Natural killer cell (primary cell): ENCODE measurements at regions of chr7 and their contacts with region 1.

Region 1: GRCh38 chr7:604001-604883 is 84.6 kb upstream of the PDGFA start:
- DNase-seq: peak; percentile 93 to 96
- ATAC-seq: peak; percentile 61 to 89 (median 78)
- H3K4me3 ChIP-seq: peak overlapping the region; percentile 41
- H3K4me3 Mint-ChIP-seq: peak overlapping the region; percentile 98
- H3K27ac ChIP-seq: peak overlapping the region; percentile 98
- H3K27ac Mint-ChIP-seq: peak overlapping the region; percentile 100
- H3K4me1 ChIP-seq: peaks cover 78% of the 10 kb centered on the region
- H3K4me1 Mint-ChIP-seq: peaks cover 25 to 43% of the 10 kb centered on the region in 2 donors
- H3K27me3 ChIP-seq: no peaks in the 10 kb centered on the region
- H3K27me3 Mint-ChIP-seq: no peaks in the 10 kb centered on the region
- CTCF ChIP-seq: no peak

Region 2: DNA sequence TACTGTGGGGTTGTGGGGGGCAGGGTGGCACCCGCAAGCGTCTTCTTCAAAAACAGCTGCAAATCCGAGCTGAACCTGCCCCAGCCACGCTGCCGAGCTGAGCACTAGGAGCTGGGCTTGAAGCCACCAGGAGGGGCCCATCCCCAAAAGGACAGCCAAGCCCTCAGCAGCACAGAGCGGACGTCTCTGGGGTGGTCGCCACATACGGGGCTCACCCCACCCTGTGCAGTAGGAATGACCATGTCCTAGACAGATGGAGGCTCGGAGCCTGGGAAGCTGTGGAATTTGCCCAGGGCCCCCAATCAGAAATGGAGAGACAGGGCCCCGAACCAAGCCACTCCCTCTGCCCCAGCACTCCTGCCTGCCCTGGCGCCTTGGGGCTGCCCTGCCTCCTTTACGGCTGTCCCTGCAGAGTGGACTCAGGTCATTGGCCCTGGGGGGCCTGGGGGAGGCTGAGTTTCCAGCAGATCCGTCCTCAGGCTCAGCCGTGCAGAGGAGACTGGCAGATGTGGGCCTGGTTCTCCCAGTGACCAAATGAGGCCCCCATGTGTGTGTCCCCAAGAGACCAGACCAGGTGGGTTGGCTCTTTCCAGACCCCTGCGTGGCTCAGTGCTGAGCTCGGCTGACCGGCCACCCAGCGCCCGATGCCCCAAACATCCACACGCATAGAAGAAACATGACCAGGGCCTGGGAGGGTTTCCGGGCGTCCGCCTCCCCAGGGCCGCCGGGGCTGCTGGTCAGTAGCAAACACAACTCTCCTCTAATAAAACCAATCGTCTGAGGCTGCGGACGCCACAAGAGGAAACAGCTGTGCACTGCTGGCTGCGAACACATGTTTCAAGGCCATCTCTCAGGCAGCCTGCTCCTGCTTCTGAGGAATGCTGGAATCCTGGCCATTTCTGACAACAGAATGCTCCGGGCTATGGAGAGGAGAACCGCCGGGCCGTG is 139.5 kb before region 1 on chr7:
- intact Hi-C with region 1: loop called (anchors 5 kb)
- DNase-seq: no peak
- ATAC-seq: no peak
- H3K4me3 ChIP-seq: no peak overlapping the region
- H3K4me3 Mint-ChIP-seq: no peak overlapping the region
- H3K27ac ChIP-seq: no peak overlapping the region
- H3K27ac Mint-ChIP-seq: no peak overlapping the region
- H3K4me1 ChIP-seq: peaks cover 15% of the 10 kb centered on the region
- H3K4me1 Mint-ChIP-seq: peaks cover 18 to 27% of the 10 kb centered on the region in 2 donors
- H3K27me3 ChIP-seq: no peaks in the 10 kb centered on the region
- H3K27me3 Mint-ChIP-seq: no peaks in the 10 kb centered on the region
- CTCF ChIP-seq: no peak

Region 3: GRCh38 chr7:584122-584465 is 20.1 kb before region 1 on chr7:
- intact Hi-C with region 1: no loop called
- DNase-seq: peak; percentile 35 to 94
- ATAC-seq: peak; percentile 75 to 84 (median 78)
- H3K4me3 ChIP-seq: peak overlapping the region; percentile 31
- H3K4me3 Mint-ChIP-seq: peak overlapping the region; percentile 43
- H3K27ac ChIP-seq: peak overlapping the region; percentile 50
- H3K27ac Mint-ChIP-seq: peak overlapping the region; percentile 38 to 70
- H3K4me1 ChIP-seq: peaks cover 22% of the 10 kb centered on the region
- H3K4me1 Mint-ChIP-seq: peaks cover 0 to 24% of the 10 kb centered on the region in 2 donors
- H3K27me3 ChIP-seq: no peaks in the 10 kb centered on the region
- H3K27me3 Mint-ChIP-seq: no peaks in the 10 kb centered on the region
- CTCF ChIP-seq: no peak

Region 4: GRCh38 chr7:618539-619367 is 14.5 kb after region 1 on chr7:
- intact Hi-C with region 1: loop called (anchors 2 kb)
- DNase-seq: peak; percentile 60 to 93
- ATAC-seq: peak; percentile 78 to 94 (median 89)
- H3K4me3 ChIP-seq: no peak overlapping the region
- H3K4me3 Mint-ChIP-seq: peak overlapping the region; percentile 85
- H3K27ac ChIP-seq: peak overlapping the region; percentile 81
- H3K27ac Mint-ChIP-seq: peak overlapping the region; percentile 87 to 92
- H3K4me1 ChIP-seq: peaks cover 42% of the 10 kb centered on the region
- H3K4me1 Mint-ChIP-seq: peaks cover 21 to 43% of the 10 kb centered on the region in 2 donors
- H3K27me3 ChIP-seq: no peaks in the 10 kb centered on the region
- H3K27me3 Mint-ChIP-seq: no peaks in the 10 kb centered on the region
- CTCF ChIP-seq: no peak

Region 5: GRCh38 chr7:1397491-1398327 is 793.5 kb after region 1 on chr7:
- intact Hi-C with region 1: no loop called
- DNase-seq: no peak
- ATAC-seq: no peak
- H3K4me3 ChIP-seq: no peak overlapping the region
- H3K4me3 Mint-ChIP-seq: no peak overlapping the region
- H3K27ac ChIP-seq: no peak overlapping the region
- H3K27ac Mint-ChIP-seq: no peak overlapping the region
- H3K4me1 ChIP-seq: no peaks in the 10 kb centered on the region
- H3K4me1 Mint-ChIP-seq: no peaks in the 10 kb centered on the region
- H3K27me3 ChIP-seq: peaks cover 3% of the 10 kb centered on the region
- H3K27me3 Mint-ChIP-seq: peaks cover 16 to 25% of the 10 kb centered on the region in 2 donors
- CTCF ChIP-seq: no peak